ENCODE measurements at regions of chr12 and their contacts with region 1.

Region 1: DNA sequence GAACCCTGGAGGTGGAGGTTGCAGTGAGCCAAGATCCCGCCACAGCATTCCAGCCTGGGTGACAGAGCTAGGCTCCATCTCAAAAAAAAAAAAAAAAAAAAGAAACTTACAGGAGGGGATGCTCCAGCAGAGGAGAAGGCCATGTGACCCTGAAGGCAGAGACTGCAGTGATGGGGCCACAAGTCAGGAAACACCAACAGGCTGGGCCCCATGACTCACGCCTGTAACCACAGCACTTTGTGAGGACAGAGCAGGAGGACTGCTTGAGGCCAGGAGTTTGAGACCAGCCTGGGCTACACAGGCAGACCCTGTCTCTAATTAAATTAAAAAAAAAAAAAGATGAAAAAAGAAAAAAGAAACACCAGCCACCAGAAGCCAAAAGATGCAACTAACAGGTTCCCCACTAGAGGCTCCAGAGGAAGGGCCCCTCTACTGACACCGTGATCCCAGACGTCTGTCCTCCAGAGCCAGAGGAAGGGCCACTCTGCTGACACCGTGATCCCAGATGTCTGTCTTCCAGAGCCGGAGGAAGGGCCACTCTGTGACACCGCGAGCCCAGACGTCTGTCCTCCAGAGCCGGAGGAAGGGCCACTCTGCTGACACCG is 9.1 kb upstream of the GLT1D1 start:
- H3K4me3 Mint-ChIP-seq: no peak overlapping the region
- H3K27ac Mint-ChIP-seq: peak overlapping the region; percentile 63
- H3K4me1 Mint-ChIP-seq: peaks cover 44% of the 10 kb centered on the region
- H3K27me3 Mint-ChIP-seq: peaks cover 14% of the 10 kb centered on the region

Region 2: DNA sequence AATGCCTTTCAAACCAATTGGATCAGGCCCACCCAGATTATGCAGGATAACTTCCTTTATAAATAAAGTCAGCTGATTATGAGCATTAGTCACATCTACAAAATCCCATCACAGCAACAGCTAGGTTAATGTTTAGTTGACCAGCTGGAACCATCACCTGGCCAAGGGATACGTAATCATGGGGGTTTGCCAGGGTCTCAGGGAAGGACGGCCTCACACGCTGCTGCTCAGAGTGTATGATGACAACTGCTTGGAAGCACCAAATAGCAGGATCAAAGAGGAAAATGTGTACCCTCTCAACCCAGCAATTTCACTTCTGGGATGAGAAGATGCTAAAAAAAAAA is 182.9 kb before region 1 on chr12:
- intact Hi-C with region 1: no loop called
- H3K4me3 Mint-ChIP-seq: no peak overlapping the region
- H3K27ac Mint-ChIP-seq: no peak overlapping the region
- H3K4me1 Mint-ChIP-seq: no peaks in the 10 kb centered on the region
- H3K27me3 Mint-ChIP-seq: no peaks in the 10 kb centered on the region

Region 3: DNA sequence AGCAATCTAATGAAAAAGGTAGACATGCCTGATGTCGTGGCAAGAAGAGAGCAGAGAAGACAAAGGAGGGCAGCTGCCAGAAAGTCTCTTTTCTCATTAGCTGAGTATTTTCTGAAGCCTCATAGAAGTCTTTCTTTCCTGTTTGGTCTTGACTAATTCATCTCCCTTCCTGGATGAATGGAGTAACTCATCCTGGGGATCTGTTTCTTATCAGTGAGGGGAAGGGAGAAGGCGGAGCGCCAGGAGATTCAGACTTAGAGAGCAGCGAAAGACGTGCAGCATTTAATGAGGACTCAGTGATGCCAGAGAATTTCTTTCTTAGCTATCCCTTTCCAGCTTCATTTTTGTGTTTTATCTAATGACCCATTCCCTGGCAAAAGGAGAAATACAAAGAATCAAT is 109.8 kb before region 1 on chr12:
- intact Hi-C with region 1: no loop called
- H3K4me3 Mint-ChIP-seq: no peak overlapping the region
- H3K27ac Mint-ChIP-seq: no peak overlapping the region
- H3K4me1 Mint-ChIP-seq: no peaks in the 10 kb centered on the region
- H3K27me3 Mint-ChIP-seq: peaks cover 8% of the 10 kb centered on the region

Region 4: GRCh38 chr12:128794661-128795529 is 49.2 kb before region 1 on chr12:
- intact Hi-C with region 1: loop called (anchors 5 kb)
- H3K4me3 Mint-ChIP-seq: no peak overlapping the region
- H3K27ac Mint-ChIP-seq: no peak overlapping the region
- H3K4me1 Mint-ChIP-seq: peaks cover 76% of the 10 kb centered on the region
- H3K27me3 Mint-ChIP-seq: peaks cover 2% of the 10 kb centered on the region

Region 5: DNA sequence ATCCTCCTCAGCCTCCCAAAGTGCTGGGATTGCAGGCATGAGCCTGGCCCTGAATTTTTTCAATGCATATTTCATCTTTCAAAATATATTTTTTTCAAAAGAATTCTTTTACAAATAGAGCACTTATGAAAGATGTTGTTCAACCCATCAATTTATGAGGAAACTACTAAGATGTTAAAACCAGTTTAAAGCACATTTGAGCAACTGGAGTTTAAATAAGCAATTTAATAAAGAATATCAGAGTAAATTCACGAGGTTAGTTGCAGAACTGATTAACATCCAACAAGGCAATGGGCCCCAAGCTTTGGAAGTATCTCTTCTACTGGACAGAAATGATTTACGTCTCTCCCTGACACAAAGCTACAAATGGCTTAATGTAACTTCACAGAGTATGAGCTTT is 32.4 kb after region 1 on chr12:
- intact Hi-C with region 1: no loop called
- H3K4me3 Mint-ChIP-seq: no peak overlapping the region
- H3K27ac Mint-ChIP-seq: no peak overlapping the region
- H3K4me1 Mint-ChIP-seq: peaks cover 14% of the 10 kb centered on the region
- H3K27me3 Mint-ChIP-seq: no peaks in the 10 kb centered on the region